ENCODE measurements at regions of chr20 and their contacts with region 1.

Region 1: DNA sequence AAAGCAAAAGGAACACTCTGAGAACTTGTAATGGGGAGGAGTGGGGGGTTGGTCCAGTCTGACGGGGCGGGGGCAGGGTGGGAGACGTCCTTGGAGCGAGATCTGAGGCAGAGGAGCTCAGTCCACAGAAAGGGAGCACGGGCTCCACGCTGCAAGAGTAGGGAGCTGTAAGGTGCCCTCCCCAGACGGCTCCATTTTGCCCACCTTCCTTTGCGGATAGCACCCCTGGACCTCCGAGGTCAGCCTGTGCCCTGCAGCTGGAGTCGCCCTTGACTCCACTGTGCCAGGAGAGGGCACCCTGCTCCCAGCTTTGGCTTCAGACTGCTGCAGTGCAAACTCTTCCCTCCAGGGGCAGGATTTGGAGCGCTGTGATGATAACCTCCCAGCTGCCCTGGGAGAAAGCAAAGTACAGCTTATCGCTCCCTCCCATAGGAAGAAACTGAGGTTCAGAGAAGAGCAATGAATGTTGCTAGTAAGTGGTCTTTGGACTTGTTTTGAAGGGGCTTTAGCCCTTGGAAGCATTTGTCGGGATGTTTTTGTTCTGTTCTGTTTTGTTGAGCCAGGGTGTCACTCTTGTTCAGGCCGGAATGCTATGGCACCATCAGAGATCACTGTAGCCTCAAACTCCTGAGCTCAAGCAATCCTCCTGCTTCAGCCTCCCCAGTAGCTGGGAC is 9.5 kb upstream of the AHCY start:
- DNase-seq: peak; percentile 84 to 91 (median 88)
- H3K4me3 ChIP-seq: peak overlapping the region in 6 of 7 experiments; percentile 2 to 74 (median 52)
- H3K27ac ChIP-seq: no peak overlapping the region
- H3K4me1 ChIP-seq: peaks cover 0 to 16% (median 13%) of the 10 kb centered on the region in 4 experiments
- H3K27me3 ChIP-seq: peaks cover 2 to 11% (median 9%) of the 10 kb centered on the region in 5 experiments

Region 2: DNA sequence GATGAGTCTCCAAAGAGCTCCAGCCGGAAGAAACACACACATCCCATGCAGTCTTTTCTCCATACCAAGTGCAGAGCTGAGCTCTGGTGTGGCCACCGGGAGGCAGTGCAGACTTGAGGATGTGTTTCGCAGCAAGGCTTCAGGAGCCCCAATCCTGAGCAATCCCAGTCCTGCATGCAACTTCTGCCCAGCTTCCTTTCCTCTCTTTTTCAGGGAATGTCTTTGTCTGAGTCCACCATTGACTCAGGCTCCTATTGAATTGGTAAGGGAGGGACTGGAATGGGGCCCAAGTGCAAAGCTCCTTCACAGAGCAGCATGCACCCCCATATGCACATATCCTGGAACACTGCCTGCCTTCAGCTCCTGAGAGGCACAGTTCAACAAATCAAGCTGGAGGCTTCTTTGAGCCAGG is 122.0 kb before region 1 on chr20:
- CTCF ChIA-PET with region 1: interaction called, 10 read pairs
- POLR2A ChIA-PET with region 1: no interaction called
- DNase-seq: peak; percentile 54 to 63 (median 56)
- H3K4me3 ChIP-seq: no peak overlapping the region
- H3K27ac ChIP-seq: no peak overlapping the region
- H3K4me1 ChIP-seq: no peaks in the 10 kb centered on the region
- H3K27me3 ChIP-seq: peaks cover 0 to 9% (median 3%) of the 10 kb centered on the region in 5 experiments

Region 3: DNA sequence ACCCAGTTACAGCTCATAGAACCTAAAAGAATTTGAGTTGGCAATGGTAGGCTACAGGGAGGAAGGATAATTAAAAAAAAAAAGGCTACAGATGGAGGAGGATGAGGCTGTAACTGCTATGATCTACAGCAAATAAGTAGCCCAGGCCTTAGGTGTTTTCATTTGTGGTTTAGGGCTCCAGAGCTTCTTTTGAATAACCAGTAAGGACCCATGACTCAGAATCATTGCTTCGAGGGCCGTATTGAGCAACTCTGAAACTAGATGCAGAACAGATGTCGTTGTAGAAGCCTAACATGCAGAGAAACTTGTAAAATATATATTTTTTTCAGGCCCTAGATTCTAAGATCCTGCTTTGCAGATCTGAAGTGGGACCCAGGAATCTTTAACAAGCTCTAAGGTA is 90.5 kb before region 1 on chr20:
- CTCF ChIA-PET with region 1: no interaction called
- POLR2A ChIA-PET with region 1: no interaction called
- DNase-seq: peak in 2 of 3 donors; percentile 13 to 33
- H3K4me3 ChIP-seq: no peak overlapping the region
- H3K27ac ChIP-seq: no peak overlapping the region
- H3K4me1 ChIP-seq: no peaks in the 10 kb centered on the region
- H3K27me3 ChIP-seq: peaks cover 2 to 9% (median 3%) of the 10 kb centered on the region in 5 experiments

Region 4: GRCh38 chr20:34249291-34249690 is 63.4 kb before region 1 on chr20:
- CTCF ChIA-PET with region 1: no interaction called
- POLR2A ChIA-PET with region 1: no interaction called
- DNase-seq: peak; percentile 32 to 89 (median 81)
- H3K4me3 ChIP-seq: no peak overlapping the region
- H3K27ac ChIP-seq: no peak overlapping the region
- H3K4me1 ChIP-seq: peaks cover 0 to 18% (median 4%) of the 10 kb centered on the region in 4 experiments
- H3K27me3 ChIP-seq: no peaks in the 10 kb centered on the region

Region 5: DNA sequence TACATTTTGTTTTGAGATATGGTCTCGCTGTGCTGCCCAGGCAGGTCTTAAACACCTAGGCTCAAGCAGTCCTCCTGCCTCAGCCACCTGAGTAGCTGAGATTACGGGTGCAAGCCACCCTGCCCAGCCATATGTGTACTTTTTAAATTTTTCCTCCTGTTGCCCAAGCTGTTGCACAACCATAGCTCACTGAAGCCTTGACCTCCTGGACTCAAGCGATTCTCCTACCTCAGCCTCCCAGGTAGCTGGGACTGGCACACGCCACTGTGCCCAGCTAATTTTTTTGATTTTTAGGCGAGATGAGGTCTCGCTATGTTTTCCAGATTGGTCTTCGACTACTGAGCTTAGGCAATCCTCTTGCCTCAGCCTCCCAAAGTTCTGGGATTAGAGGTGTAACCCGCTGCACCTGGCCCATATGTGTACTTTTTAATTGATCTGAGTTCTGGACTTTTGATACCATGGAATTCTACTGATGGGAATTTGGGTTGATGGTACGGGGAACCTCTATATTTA is 95.3 kb after region 1 on chr20:
- CTCF ChIA-PET with region 1: interaction called, 10 read pairs
- POLR2A ChIA-PET with region 1: no interaction called
- DNase-seq: no peak
- H3K4me3 ChIP-seq: no peak overlapping the region
- H3K27ac ChIP-seq: no peak overlapping the region
- H3K4me1 ChIP-seq: peaks cover 4 to 24% (median 9%) of the 10 kb centered on the region in 4 experiments
- H3K27me3 ChIP-seq: no peaks in the 10 kb centered on the region

Region 6: GRCh38 chr20:34473262-34473883 is 160.7 kb after region 1 on chr20:
- CTCF ChIA-PET with region 1: interaction called, 24 read pairs
- POLR2A ChIA-PET with region 1: no interaction called
- DNase-seq: peak; percentile 45 to 62 (median 62)
- H3K4me3 ChIP-seq: no peak overlapping the region
- H3K27ac ChIP-seq: no peak overlapping the region
- H3K4me1 ChIP-seq: peaks cover 0 to 2% (median under 1%) of the 10 kb centered on the region in 4 experiments
- H3K27me3 ChIP-seq: no peaks in the 10 kb centered on the region

Region 7: DNA sequence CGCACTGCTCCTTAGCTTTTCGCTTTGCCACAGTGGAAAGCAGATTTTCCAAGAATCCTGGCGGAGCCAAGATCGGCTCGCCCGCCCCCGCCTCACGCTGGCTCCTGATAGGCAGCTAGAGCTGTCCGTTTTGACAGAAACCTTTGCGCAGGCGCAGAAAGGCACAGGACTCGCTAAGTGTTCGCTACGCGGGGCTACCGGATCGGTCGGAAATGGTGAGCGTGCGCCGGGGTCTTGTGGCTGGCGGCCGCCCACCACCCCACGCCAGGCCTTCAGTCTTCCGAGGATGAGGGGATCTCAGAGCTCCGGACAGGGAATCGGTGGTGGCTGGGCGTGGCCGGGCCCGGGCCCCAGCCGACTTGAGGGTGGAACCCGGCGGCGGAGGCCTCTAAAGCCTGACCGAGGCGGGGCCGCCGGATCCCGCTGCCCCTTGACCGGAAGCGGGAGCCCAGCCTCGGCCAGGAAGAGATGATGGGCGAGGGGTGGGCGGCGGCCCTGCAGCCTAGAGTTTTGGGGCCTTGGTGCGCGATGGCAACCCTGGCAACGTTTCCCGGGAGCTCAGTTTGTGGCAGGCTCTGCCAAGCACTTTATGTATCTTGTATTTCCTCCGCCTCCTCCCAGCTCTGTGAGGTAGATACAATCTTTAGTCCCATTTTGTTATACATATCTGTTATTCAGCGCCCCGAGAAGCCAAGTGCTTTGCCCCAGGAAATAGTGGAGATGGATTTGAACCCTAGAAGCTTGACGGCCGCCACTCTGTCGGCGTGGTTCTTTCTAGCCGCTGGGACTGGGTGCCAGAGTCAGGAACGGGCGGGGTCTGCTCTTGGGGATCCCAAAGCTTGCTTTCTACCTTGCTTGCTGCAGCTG is 203.8 kb after region 1 on chr20 and contains the start of gene DYNLRB1:
- CTCF ChIA-PET with region 1: interaction called, 68 read pairs
- POLR2A ChIA-PET with region 1: interaction called, 3 read pairs
- DNase-seq: peak; percentile 93 to 96 (median 94)
- H3K4me3 ChIP-seq: peak within 1 kb of the TSS; percentile 75 to 100 (median 95)
- H3K27ac ChIP-seq: peak within 1 kb of the TSS; percentile 80 to 90
- H3K4me1 ChIP-seq: peaks cover 5 to 26% (median 16%) of the 10 kb centered on the region in 4 experiments
- H3K27me3 ChIP-seq: no peaks in the 10 kb centered on the region

Region 8: GRCh38 chr20:34768096-34768495 is 455.4 kb after region 1 on chr20:
- CTCF ChIA-PET with region 1: interaction called, 10 read pairs
- POLR2A ChIA-PET with region 1: no interaction called
- DNase-seq: no peak
- H3K4me3 ChIP-seq: no peak overlapping the region
- H3K27ac ChIP-seq: no peak overlapping the region
- H3K4me1 ChIP-seq: no peaks in the 10 kb centered on the region
- H3K27me3 ChIP-seq: no peaks in the 10 kb centered on the region